Activated CD4-positive, alpha-beta T cell treated with anti-CD3 and anti-CD28 coated beads for 36 hours (primary cell): ENCODE measurements at regions of chr13 and their contacts with region 1.

Region 1: DNA sequence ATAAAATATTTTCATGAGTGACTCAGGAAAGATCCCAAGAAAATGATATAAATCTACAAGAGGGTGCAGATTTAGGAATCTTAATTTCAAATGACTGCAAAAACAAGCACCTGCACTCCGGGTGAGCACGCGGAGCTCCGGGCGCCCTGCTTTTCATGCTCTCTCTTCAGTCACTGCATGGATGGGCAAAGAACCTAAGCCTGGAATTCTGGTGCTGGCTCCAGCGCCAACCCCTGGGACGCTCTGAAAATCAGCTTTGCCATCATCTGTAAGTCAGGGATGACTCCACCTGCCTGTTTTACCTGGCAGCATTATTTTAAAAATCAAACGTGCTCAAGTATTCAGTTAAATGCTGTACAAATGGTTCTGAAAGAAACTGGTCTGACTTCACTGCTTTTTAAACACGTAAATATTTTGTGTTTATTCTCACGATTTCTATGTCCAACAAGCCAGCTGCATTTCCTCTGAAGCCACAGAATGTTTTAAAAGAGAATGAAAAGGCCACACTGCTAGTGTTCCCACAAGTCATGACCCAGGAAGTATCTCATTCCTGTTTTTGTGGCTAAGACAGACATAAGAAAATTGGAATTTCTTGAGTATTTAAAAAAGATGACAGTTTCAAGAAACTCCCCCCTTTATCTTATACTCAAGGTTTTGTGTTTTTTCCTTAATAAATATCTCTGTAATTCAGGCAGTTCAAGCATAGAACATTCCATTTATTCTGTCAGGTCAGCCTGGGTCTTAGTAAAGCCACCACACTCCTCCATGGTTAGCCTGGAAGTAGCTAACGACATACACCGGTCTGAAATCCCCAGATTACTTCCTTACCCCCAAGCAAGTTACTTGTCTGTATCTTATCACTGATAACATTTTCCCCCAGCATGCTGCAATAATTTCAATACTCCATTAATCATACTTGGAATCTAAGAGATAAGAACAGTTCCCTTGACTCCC is 81.1 kb downstream of the COL4A1 start:
- DNase-seq: no peak
- ATAC-seq: no peak
- H3K4me3 Mint-ChIP-seq: no peak overlapping the region
- H3K27ac Mint-ChIP-seq: no peak overlapping the region
- H3K4me1 Mint-ChIP-seq: no peaks in the 10 kb centered on the region
- H3K27me3 Mint-ChIP-seq: peaks cover 20% of the 10 kb centered on the region

Region 2: GRCh38 chr13:110244071-110244830 is 18.4 kb after region 1 on chr13:
- CTCF ChIA-PET with region 1: no interaction called
- POLR2A ChIA-PET with region 1: no interaction called
- intact Hi-C with region 1: no loop called
- DNase-seq: no peak
- ATAC-seq: no peak
- H3K4me3 Mint-ChIP-seq: no peak overlapping the region
- H3K27ac Mint-ChIP-seq: no peak overlapping the region
- H3K4me1 Mint-ChIP-seq: no peaks in the 10 kb centered on the region
- H3K27me3 Mint-ChIP-seq: peaks cover 22% of the 10 kb centered on the region

Region 3: GRCh38 chr13:110361365-110361911 is 135.6 kb after region 1 on chr13:
- CTCF ChIA-PET with region 1: no interaction called
- POLR2A ChIA-PET with region 1: no interaction called
- intact Hi-C with region 1: no loop called
- DNase-seq: no peak
- ATAC-seq: no peak
- H3K4me3 Mint-ChIP-seq: no peak overlapping the region
- H3K27ac Mint-ChIP-seq: no peak overlapping the region
- H3K4me1 Mint-ChIP-seq: no peaks in the 10 kb centered on the region
- H3K27me3 Mint-ChIP-seq: peaks cover 10% of the 10 kb centered on the region

Region 4: GRCh38 chr13:110444226-110444653 is 218.4 kb after region 1 on chr13:
- CTCF ChIA-PET with region 1: no interaction called
- POLR2A ChIA-PET with region 1: no interaction called
- intact Hi-C with region 1: loop called in 1 of 2 experiments (anchors 1 kb)
- DNase-seq: no peak
- ATAC-seq: no peak
- H3K4me3 Mint-ChIP-seq: no peak overlapping the region
- H3K27ac Mint-ChIP-seq: no peak overlapping the region
- H3K4me1 Mint-ChIP-seq: no peaks in the 10 kb centered on the region
- H3K27me3 Mint-ChIP-seq: peaks cover 40% of the 10 kb centered on the region